CD4-positive, alpha-beta memory T cell (primary cell): ENCODE measurements at regions of chr22 and their contacts with region 1.

Region 1: DNA sequence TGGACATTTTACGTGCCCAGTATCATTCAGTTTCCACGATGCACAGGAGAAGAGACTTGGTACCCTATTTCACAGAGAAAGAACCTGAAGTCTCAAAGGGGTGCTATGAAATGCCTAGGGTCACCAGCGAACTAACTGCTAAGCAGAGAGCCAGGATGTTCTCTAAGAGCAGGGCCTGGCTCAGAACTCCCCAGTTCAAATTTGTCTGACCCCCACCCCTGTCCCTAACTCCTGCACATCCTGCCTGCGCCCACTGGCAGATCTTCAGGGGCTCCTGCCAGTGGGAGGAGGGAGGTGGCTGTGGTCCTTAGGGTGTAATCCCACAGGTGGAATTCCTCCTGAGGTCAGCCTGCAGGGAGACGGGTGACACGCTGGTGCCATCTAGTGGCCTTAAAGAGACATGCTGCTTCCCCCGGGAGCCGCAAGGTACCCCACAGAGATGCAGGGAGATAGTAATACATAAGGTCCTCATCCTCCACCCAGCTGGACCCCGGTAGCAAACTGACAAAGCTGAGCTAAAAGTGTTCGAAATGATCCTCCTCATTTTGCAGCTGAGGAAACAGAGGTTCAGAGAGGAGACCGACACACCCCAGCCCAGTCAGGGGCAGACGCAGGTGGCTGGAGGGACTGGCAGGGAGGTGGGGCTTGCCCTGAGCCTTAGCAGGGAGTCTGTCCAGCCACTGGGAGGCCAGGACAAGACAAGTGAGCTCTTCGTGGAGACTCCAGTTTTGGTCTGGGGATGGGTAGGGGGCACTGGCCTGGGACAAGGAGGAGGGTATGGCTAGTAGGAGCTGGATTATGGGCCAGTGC is 34.1 kb downstream of the MB start:
- DNase-seq: peak; percentile 38 to 56 (median 49)
- H3K4me3 ChIP-seq: no peak overlapping the region
- H3K4me3 Mint-ChIP-seq: no peak overlapping the region
- H3K27ac ChIP-seq: no peak overlapping the region
- H3K27ac Mint-ChIP-seq: no peak overlapping the region
- H3K4me1 ChIP-seq: no peaks in the 10 kb centered on the region
- H3K4me1 Mint-ChIP-seq: peaks cover 0 to 2% (median 0%) of the 10 kb centered on the region in 4 donors
- H3K27me3 ChIP-seq: no peaks in the 10 kb centered on the region
- H3K27me3 Mint-ChIP-seq: no peaks in the 10 kb centered on the region

Region 2: DNA sequence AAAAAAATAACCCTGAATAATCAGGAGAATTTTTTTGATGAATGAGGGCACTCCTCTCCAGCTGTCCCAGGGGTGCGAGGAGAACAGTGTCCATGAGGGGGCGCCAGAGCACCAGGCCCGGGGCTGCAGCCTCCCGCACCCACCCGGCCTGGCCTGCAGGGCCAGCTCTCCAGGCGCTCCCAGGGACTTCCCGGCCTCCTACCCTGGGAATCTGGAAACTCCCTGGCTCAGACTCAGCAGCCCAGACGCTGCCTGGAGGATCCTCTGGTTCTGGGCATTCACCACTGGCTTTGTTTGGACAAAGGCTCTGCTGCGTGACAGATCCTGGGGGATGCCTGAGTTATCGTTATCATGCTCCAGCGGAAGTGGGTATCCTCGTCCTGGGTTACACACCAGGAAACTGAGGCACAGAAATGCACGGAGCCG is 152.2 kb before region 1 on chr22:
- CTCF ChIA-PET with region 1: interaction called, 49 read pairs
- POLR2A ChIA-PET with region 1: no interaction called
- intact Hi-C with region 1: loop called (anchors 1 kb)
- DNase-seq: peak; percentile 53 to 64 (median 55)
- H3K4me3 ChIP-seq: no peak overlapping the region
- H3K4me3 Mint-ChIP-seq: no peak overlapping the region
- H3K27ac ChIP-seq: no peak overlapping the region
- H3K27ac Mint-ChIP-seq: no peak overlapping the region
- H3K4me1 ChIP-seq: no peaks in the 10 kb centered on the region
- H3K4me1 Mint-ChIP-seq: peaks cover 0 to 5% (median 3%) of the 10 kb centered on the region in 4 donors
- H3K27me3 ChIP-seq: no peaks in the 10 kb centered on the region
- H3K27me3 Mint-ChIP-seq: no peaks in the 10 kb centered on the region